Panc1 (cell line): ENCODE measurements at regions of chr17 and their contacts with region 1.

Region 1: GRCh38 chr17:55601874-55602364 is 90.7 kb upstream of the SMIM36 start:
- DNase-seq: peak; percentile 33
- ATAC-seq: peak; percentile 75; the same call in 1 of the 2 replicates
- H3K4me3 ChIP-seq: no peak overlapping the region
- H3K27ac ChIP-seq: no peak overlapping the region
- H3K4me1 ChIP-seq: no peaks in the 10 kb centered on the region
- H3K27me3 ChIP-seq: no peaks in the 10 kb centered on the region
- CTCF ChIP-seq: peak; percentile 79

Region 2: DNA sequence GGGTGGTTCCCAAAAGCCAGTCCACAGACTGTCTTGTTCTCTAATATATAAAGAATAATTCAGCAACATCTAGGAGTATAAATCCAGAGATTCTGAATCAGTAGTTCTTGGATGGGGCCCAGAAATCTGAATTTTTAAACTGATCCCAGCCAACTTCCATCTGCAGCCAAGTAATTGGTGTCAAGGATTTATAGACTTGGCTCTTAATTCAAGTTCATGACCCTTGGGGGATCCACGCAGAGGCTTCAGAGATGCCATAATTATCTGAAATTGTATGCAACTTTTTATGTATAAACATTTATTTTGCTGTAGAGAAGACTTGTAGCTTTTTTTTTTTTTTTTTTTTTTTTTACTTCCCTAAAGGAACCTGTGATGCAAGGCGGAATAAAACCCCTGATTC is 276.5 kb before region 1 on chr17:
- CTCF ChIA-PET with region 1: interaction called, 11 read pairs
- POLR2A ChIA-PET with region 1: no interaction called
- in situ Hi-C with region 1: no loop called
- intact Hi-C with region 1: no loop called
- DNase-seq: no peak
- ATAC-seq: no peak
- H3K4me3 ChIP-seq: no peak overlapping the region
- H3K27ac ChIP-seq: no peak overlapping the region
- H3K4me1 ChIP-seq: peaks cover 3% of the 10 kb centered on the region; the same call in 1 of the 2 replicates
- H3K27me3 ChIP-seq: no peaks in the 10 kb centered on the region
- CTCF ChIP-seq: no peak

Region 3: DNA sequence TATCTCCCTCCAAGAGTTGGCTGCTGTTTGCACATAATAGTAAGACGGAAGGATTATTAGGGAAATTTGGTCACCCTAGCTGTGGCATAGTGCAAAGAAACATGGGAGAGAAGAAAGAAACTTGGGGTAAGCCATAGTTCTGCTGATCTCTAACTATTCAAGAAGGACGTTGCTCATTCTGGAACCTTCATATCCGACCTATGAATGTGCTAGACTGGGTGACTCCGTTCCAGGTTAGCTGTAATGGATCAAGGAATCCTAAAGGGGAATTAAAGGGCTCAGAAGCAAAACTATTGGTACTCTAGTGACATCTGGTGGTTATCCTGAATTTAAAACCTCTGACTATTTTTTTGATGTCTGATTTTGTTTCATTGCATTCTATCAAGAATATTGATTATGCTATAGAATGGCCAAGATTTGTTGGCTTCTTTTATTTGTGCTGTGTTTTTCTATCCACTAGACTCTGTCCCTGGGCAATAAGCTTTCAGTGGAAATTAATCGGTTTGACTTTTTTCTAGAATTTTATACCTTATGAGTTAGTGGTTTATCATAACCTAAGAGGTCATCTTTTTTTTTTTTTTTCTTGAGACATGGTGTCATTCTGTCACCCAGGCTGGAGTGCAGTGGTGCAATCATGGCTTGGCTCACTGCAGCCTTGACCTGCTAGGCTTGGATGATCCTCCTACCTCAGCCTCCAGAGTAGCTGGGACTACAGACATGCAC is 168.4 kb after region 1 on chr17:
- CTCF ChIA-PET with region 1: interaction called, 4 read pairs
- POLR2A ChIA-PET with region 1: no interaction called
- in situ Hi-C with region 1: no loop called
- intact Hi-C with region 1: loop called (anchors 10 kb)
- DNase-seq: no peak
- ATAC-seq: peak; percentile 87
- H3K4me3 ChIP-seq: no peak overlapping the region
- H3K27ac ChIP-seq: no peak overlapping the region
- H3K4me1 ChIP-seq: 0 out of 2 replicates have a peak, but pooled peaks cover 5% of the 10 kb centered on the region
- H3K27me3 ChIP-seq: no peaks in the 10 kb centered on the region
- CTCF ChIP-seq: peak; percentile 69

Region 4: GRCh38 chr17:56290101-56290801 is 688.3 kb after region 1 on chr17:
- CTCF ChIA-PET with region 1: no interaction called
- POLR2A ChIA-PET with region 1: no interaction called
- in situ Hi-C with region 1: no loop called
- intact Hi-C with region 1: no loop called
- DNase-seq: no peak
- ATAC-seq: no peak
- H3K4me3 ChIP-seq: peak overlapping the region; percentile 19 to 49
- H3K27ac ChIP-seq: no peak overlapping the region
- H3K4me1 ChIP-seq: no peaks in the 10 kb centered on the region
- H3K27me3 ChIP-seq: no peaks in the 10 kb centered on the region
- CTCF ChIP-seq: no peak